HepG2 (cell line): ENCODE measurements at regions of chr12 and their contacts with region 1.

Region 1: DNA sequence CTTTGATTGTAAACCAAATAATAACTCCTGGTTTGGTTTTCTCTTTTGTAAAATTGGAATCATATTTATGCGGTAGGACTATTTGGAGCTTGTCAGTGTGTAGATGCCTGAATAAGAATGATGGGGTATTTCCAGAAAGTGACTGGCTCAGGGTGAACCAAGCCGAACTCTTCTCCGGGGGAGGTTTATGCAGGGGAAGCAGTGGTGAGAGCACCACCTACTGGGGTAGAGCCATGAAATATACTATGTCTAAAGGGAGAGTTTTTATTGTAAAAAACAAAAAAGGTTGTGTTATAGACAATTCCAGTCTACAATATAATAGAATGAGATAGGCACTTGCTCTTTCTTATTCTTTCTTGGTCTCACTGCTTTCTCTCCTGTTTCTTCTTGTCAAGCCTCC is 222.9 kb upstream of the SLC16A7 start:
- DNase-seq: no peak
- ATAC-seq: peak; percentile 68
- H3K4me3 ChIP-seq: no peak overlapping the region
- H3K27ac ChIP-seq: no peak overlapping the region
- H3K4me1 ChIP-seq: no peaks in the 10 kb centered on the region
- H3K27me3 ChIP-seq: no peaks in the 10 kb centered on the region
- CTCF ChIP-seq: no peak
- EP300 ChIP-seq: no peak
- POLR2A ChIP-seq: no peak
- RAD21 ChIP-seq: no peak

Region 2: GRCh38 chr12:59113831-59114615 is 258.9 kb before region 1 on chr12:
- CTCF ChIA-PET with region 1: no interaction called
- POLR2A ChIA-PET with region 1: no interaction called
- in situ Hi-C with region 1: no loop called
- intact Hi-C with region 1: loop called (anchors 1 kb)
- DNase-seq: peak; percentile 63
- ATAC-seq: peak; percentile 97
- H3K4me3 ChIP-seq: peak overlapping the region in 1 of 3 experiments; percentile 40; a peak in 1 of 6 replicates
- H3K27ac ChIP-seq: no peak overlapping the region
- H3K4me1 ChIP-seq: no peaks in the 10 kb centered on the region
- H3K27me3 ChIP-seq: no peaks in the 10 kb centered on the region
- CTCF ChIP-seq: peak; percentile 82
- EP300 ChIP-seq: no peak
- POLR2A ChIP-seq: no peak
- RAD21 ChIP-seq: peak; percentile 64; the same call in 1 of the 2 replicates